Activated B cell treated with CpG ODN at 0.5 μM for 24 hours (primary cell): ENCODE measurements at regions of chr1 and their contacts with region 1.

Region 1: DNA sequence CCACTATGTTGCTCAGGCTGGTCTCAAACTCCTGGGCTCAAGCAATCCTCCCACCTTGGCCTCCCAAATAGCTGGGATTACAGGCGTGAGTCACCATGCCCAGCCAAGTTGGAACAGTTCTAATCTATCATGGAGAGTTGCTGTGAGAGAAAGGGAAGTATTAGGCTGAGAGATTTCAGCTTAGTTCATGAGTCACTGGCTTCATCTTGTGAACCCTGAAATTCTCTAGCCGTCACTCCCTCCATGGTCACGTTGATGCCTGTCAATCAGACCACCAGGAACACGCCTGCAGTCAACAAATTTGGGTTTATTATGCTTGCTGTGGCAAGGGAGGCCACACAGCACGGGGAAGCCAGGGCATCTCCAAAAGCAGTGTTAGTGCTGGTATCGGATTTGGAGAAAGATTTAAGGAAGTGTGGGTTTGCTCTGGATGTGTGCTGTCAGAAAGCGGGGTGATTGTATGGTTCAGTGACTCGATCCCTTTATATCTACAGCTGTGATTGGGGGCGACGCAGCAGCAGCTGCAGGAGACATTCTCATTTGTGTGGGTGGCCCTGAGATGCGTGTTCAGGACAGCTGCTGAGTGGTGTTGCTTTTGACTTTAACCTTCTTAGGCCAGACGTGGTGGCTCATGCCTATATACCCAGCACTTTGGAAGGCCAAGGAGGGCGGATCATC is 18.7 kb downstream of the UQCRHL start:
- DNase-seq: no peak
- ATAC-seq: no peak
- H3K4me3 Mint-ChIP-seq: no peak overlapping the region
- H3K27ac Mint-ChIP-seq: no peak overlapping the region
- H3K4me1 Mint-ChIP-seq: peaks cover 2% of the 10 kb centered on the region
- H3K27me3 Mint-ChIP-seq: peaks cover 7% of the 10 kb centered on the region
- CTCF ChIP-seq: no peak

Region 2: GRCh38 chr1:14996133-14997050 is 792.4 kb before region 1 on chr1:
- CTCF ChIA-PET with region 1: no interaction called
- POLR2A ChIA-PET with region 1: no interaction called
- intact Hi-C with region 1: no loop called
- DNase-seq: no peak
- ATAC-seq: no peak
- H3K4me3 Mint-ChIP-seq: no peak overlapping the region
- H3K27ac Mint-ChIP-seq: no peak overlapping the region
- H3K4me1 Mint-ChIP-seq: no peaks in the 10 kb centered on the region
- H3K27me3 Mint-ChIP-seq: no peaks in the 10 kb centered on the region
- CTCF ChIP-seq: no peak

Region 3: DNA sequence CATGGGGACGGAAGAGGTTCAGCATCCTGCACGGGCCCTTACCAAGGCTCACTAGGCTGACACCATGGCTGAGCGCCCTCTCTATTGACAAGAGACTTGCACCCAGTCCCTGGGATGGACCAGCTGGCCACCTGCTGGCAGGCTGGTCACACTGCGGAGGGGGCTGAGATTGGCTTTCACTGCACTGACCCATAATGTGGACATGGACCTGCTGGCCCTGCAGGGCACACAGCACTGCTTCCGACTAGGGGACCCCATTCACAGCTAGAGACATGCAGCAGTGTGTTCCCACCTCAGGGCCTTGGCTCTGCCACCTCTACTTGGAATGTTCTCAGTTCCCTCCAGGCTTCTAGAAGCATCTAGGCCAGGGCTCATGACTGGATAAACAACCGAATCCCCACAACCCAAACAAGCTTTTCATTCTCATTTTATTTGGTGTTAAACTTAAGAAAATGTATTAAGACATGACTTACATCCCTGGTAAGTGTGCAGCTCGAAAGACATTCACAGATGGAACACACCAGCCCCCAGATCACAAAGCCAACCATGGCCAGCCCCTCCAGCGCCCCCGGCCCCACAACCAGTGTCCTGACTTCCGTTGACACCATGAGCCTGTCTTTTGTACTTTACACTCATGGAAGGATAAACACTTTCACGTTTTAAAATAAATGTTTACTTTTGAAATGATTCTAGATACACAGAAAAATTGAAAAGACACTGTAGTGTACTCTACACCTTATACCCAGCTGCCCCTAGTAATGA is 206.0 kb after region 1 on chr1:
- CTCF ChIA-PET with region 1: interaction called, 4 read pairs
- POLR2A ChIA-PET with region 1: no interaction called
- intact Hi-C with region 1: loop called (anchors 1 kb)
- DNase-seq: no peak
- ATAC-seq: peak; percentile 94
- H3K4me3 Mint-ChIP-seq: no peak overlapping the region
- H3K27ac Mint-ChIP-seq: no peak overlapping the region
- H3K4me1 Mint-ChIP-seq: no peaks in the 10 kb centered on the region
- H3K27me3 Mint-ChIP-seq: no peaks in the 10 kb centered on the region
- CTCF ChIP-seq: no peak

Region 4: DNA sequence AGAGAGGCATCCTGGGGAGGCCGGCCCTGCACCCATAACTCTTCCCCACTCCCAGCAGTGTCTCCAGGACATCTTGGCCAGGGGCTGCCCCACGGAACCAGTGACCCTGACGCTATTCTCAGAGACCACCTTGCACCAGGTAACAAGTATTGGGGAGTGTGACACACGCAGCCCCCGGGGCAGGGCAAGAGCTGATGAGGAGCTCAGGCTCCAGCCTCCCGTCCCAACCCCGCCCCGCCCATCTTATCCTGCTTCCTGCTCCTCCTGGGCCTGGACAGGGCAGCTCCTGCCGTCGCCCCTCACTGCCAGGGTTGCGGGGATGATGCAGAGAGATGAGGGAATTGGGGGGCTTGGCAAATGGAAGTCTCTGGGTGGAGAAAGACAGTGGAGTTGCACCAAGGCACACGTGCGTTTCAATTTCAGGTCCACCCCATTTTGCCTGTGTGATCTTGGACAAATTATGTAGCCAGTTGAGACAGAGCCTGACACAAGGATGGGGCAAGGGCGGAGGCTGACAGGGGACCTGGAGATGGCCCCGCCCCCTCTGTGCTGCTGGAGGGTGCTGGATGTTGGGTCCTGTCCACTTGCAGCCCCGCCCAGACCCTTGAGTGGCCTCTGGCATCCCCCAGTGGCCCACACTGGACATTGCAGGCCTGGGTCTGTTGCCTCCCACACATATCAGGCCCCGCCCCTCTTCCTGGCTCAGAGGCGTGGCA is 243.8 kb after region 1 on chr1:
- CTCF ChIA-PET with region 1: no interaction called
- POLR2A ChIA-PET with region 1: no interaction called
- intact Hi-C with region 1: loop called (anchors 1 kb)
- DNase-seq: peak; percentile 50
- ATAC-seq: peak; percentile 100
- H3K4me3 Mint-ChIP-seq: no peak overlapping the region
- H3K27ac Mint-ChIP-seq: no peak overlapping the region
- H3K4me1 Mint-ChIP-seq: peaks cover 2% of the 10 kb centered on the region
- H3K27me3 Mint-ChIP-seq: peaks cover 28% of the 10 kb centered on the region
- CTCF ChIP-seq: no peak

Region 5: DNA sequence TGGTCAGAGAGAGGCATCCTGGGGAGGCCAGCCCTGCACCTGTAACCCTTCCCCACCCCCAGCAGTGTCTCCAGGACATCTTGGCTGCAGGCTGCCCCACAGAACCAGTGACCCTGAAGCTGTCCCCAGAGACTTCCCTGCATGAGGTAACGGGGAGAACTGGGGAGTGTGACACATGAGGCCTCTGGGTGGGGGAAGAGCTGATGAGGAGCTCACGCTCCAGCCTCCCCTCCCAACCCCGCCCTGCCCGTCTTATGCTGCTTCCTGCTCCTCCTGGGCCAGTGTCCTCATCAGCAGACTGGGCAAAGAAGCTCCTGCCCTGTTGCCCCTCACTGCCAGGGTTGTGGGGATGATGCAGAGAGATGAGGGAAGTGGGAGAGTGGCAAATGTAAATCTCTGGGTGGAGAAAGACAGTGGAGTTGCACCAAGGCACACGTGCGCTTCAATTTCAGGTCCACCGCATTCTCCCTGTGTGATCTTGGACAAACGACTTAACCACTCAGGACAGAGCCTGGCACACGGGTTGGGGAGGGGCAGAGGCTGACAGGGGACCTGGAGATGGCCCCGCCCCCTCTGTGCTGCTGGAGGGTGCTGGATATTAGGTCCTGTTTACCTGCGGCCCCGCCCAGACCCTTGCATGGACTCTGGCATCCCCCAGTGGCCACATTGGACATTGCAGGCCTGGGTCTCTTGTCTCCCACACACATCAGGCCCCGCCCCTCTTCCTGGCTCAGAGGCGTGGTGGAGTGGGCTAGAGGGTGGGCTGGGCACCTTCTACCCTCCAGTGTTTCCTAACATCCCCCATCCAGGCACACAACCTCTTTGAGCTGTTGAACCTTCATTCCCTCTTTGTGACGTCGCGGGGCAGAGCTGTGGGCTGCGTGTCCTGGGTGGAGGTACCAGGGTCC is 267.1 kb after region 1 on chr1:
- CTCF ChIA-PET with region 1: interaction called, 11 read pairs
- POLR2A ChIA-PET with region 1: no interaction called
- intact Hi-C with region 1: loop called (anchors 1 kb)
- DNase-seq: peak; percentile 77
- ATAC-seq: peak; percentile 100
- H3K4me3 Mint-ChIP-seq: no peak overlapping the region
- H3K27ac Mint-ChIP-seq: no peak overlapping the region
- H3K4me1 Mint-ChIP-seq: peaks cover 6% of the 10 kb centered on the region
- H3K27me3 Mint-ChIP-seq: peaks cover 6% of the 10 kb centered on the region
- CTCF ChIP-seq: no peak

Region 6: DNA sequence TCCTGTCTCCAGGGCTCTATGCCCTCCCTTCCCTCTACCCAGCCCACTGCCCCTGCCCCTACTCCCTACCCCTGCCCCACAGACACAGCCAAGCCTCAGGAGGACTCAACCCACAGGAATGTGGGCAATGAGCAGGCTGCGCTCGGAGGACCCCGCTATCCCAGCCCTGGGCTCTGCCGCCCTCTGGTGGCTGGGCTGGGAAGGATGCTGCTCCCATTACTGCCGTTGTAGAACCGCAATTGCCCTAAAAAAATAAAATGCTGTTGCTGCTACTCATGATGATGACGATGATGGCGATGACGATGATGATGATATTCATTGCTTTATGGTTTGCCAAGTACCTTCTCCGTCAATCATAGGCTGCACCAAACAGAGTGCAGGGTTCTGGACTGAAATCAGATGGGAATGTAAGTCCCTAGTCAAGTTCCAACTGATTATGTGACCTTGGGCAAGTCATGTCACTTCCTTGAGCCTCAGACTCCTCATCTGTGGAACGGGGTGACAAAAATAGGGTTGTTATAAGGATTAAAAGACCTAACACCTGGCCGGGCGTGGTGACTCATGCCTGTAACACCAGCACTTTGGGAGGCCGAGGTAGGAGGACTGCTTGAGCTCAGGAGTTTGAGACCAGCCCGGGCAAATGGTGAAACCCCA is 399.1 kb after region 1 on chr1:
- CTCF ChIA-PET with region 1: interaction called, 3 read pairs
- POLR2A ChIA-PET with region 1: no interaction called
- intact Hi-C with region 1: loop called (anchors 1 kb)
- DNase-seq: peak; percentile 69
- ATAC-seq: peak; percentile 89
- H3K4me3 Mint-ChIP-seq: no peak overlapping the region
- H3K27ac Mint-ChIP-seq: no peak overlapping the region
- H3K4me1 Mint-ChIP-seq: no peaks in the 10 kb centered on the region
- H3K27me3 Mint-ChIP-seq: peaks cover 19% of the 10 kb centered on the region
- CTCF ChIP-seq: peak; percentile 44